ENCODE measurements at regions of chr20 and their contacts with region 1.

Region 1: GRCh38 chr20:13819885-13820645 is 35.2 kb downstream of the NDUFAF5 start:
- DNase-seq: peak; percentile 74
- H3K4me3 ChIP-seq: no peak overlapping the region
- H3K27ac ChIP-seq: no peak overlapping the region
- H3K4me1 ChIP-seq: no peaks in the 10 kb centered on the region
- H3K27me3 ChIP-seq: no peaks in the 10 kb centered on the region
- CTCF ChIP-seq: peak; percentile 55 to 56

Region 2: GRCh38 chr20:13771853-13772453 is 48.1 kb before region 1 on chr20:
- CTCF ChIA-PET with region 1: no interaction called
- dilution Hi-C with region 1: no loop called
- in situ Hi-C with region 1: no loop called
- intact Hi-C with region 1: no loop called
- DNase-seq: no peak
- H3K4me3 ChIP-seq: no peak overlapping the region
- H3K27ac ChIP-seq: no peak overlapping the region
- H3K4me1 ChIP-seq: no peaks in the 10 kb centered on the region
- H3K27me3 ChIP-seq: no peaks in the 10 kb centered on the region
- CTCF ChIP-seq: peak; percentile 46 to 49

Region 3: DNA sequence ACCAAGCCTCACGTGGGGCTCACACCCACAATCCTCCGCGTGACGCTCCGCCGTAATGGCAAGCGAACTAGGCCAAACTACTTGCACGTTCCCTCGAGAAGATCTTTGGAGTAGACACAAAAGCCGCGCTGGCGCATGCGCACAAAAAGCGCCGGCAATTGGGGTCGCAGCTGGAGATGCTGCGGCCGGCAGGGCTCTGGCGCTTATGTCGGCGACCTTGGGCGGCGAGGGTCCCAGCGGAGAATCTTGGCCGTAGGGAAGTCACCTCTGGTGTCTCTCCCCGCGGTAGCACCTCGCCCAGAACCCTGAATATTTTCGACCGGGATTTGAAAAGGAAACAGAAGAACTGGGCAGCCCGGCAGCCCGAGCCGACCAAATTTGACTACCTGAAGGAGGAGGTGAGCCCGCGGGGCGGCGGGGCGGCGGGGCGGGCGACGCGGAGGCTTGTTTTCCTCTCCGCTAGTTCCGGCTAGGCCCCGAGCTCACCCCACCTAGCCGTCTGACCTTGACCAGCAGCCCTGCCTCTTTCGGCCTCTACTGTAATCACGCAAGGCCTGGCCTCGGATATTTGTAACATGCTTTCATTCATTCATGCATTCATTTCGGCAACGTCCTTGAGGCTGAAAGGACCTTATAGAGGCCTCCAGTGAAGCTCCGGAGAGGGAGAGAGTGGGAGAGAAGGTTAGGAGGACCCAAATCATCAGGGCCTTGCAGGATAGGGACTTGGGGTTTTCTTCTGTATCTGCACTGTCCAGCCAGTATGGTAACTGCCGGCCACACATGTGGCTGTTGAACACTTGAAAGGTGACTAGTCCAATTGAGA is 35.0 kb before region 1 on chr20 and contains the starts of genes ESF1 and NDUFAF5:
- CTCF ChIA-PET with region 1: no interaction called
- dilution Hi-C with region 1: no loop called
- in situ Hi-C with region 1: no loop called
- intact Hi-C with region 1: no loop called
- DNase-seq: peak; percentile 97
- H3K4me3 ChIP-seq: peak within 1 kb of the TSS; percentile 86 to 95 (median 87)
- H3K27ac ChIP-seq: peak within 1 kb of the TSS; percentile 74
- H3K4me1 ChIP-seq: peaks cover 18% of the 10 kb centered on the region
- H3K27me3 ChIP-seq: no peaks in the 10 kb centered on the region
- CTCF ChIP-seq: no peak
- total RNA-seq, gene ESF1: 6.7 to 16.2 TPM
- total RNA-seq, gene NDUFAF5: 10.8 to 34.7 TPM

Region 4: GRCh38 chr20:13883425-13883824 is 63.4 kb after region 1 on chr20:
- CTCF ChIA-PET with region 1: no interaction called
- dilution Hi-C with region 1: no loop called
- in situ Hi-C with region 1: no loop called
- intact Hi-C with region 1: loop called (anchors 5 kb)
- DNase-seq: no peak
- H3K4me3 ChIP-seq: no peak overlapping the region
- H3K27ac ChIP-seq: no peak overlapping the region
- H3K4me1 ChIP-seq: no peaks in the 10 kb centered on the region
- H3K27me3 ChIP-seq: no peaks in the 10 kb centered on the region
- CTCF ChIP-seq: no peak

Region 5: DNA sequence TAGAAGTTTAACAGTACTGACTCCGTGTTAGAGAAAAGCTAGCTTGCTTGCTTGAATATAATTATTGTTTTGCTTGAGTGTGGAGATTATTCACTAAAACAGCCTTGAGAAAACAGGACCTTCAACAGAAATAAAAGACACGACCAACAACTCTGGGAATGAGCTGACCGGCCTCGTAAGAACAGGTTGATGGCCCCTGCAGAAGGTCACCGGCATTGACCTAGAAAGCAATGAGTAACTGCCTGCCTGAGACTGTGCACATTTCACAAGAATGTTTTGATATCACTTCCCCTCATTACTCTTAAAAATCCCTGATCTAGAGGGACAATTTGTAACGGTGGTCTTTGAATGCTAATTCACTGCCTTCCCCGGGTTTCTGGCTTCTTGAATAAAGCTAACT is 121.0 kb after region 1 on chr20:
- CTCF ChIA-PET with region 1: no interaction called
- dilution Hi-C with region 1: no loop called
- in situ Hi-C with region 1: no loop called
- intact Hi-C with region 1: loop called (anchors 5 kb)
- DNase-seq: no peak
- H3K4me3 ChIP-seq: no peak overlapping the region
- H3K27ac ChIP-seq: no peak overlapping the region
- H3K4me1 ChIP-seq: no peaks in the 10 kb centered on the region
- H3K27me3 ChIP-seq: peaks cover 2% of the 10 kb centered on the region
- CTCF ChIP-seq: no peak

Measured in mammary epithelial cell (primary cell).